Heart right ventricle (tissue), 16 donors: ENCODE measurements at regions of chr7 and their contacts with region 1.

Region 1: DNA sequence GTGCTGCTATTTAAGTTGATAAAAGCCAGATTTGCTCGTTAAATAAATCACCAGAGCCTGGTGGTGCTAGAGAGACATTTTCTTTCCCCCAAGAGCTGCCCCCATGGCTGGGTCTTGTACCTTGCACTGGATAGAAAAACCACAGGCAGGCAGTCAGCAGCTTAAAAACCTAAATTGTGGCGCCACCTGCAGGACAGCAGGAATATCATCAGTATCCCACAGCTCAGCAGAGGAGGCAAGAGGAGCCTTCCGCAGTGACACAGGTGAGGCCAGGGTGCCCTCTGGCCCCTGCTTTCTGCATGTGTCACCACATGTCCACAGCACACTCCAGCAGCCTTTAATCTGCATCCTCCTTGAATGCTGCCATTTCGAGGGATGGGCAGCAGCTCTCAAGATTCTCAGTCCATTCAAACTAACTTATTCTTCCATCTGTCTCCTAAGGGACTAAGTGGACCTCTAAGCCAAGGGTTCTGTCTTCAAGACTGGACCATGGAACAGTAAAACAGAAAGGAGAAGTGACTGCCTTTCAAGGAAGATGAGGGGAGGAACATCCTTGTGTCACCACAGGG is 4.5 kb upstream of the PLXNA4 start:
- DNase-seq: peak; percentile 36 to 81
- ATAC-seq: peak; percentile 16 to 71 (median 59)
- H3K4me3 ChIP-seq: no peak overlapping the region
- H3K27ac ChIP-seq: no peak overlapping the region
- H3K4me1 ChIP-seq: peaks cover 0 to 24% (median 7%) of the 10 kb centered on the region in 9 donors
- H3K27me3 ChIP-seq: peaks cover 0 to 29% (median 15%) of the 10 kb centered on the region in 7 donors
- CTCF ChIP-seq: peak; percentile 43 to 86 (median 77)

Region 2: DNA sequence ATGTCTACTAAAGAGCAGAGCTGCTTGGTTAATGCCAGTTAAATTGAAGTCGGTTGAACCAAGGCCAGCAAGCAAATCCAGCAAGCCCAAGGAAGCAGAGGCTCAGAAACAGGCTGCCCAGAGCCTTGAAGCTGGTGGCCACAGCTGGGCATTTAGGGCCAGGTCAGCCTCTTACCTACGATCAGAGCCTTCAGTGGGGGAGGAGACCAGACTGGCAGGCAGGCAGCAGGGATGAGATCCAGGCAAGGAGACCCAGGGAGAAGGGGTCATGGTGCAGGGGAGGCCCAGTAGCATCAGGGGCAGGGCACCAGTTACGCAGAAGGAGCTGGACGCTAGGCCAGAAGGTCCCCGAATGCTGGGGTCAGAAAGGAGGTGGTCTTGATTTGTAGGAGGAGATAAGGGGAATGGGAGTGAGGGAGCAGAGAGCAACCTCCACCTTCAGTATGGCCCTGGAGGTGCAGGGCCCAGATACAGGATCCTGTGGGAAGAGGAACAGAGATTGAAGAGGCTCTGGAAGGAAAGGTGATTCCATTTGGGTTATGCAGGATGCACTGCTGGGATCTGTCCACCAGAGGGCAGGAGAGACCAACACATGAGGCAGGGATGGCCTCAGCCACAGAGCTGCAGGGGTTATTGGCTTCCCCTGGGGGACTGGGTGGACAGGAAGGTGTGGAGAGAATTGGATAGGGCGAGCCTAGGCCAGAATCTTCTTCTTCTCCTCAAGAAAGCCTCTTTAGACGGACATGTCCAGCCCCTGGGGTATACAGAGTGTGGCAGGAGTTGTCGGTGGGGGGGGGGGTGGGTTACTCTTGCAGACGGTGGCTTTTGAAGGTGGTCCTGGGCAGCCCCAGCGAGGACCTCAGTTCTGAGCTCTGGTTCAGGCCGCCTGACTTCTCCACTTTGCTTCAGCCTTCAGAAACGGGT is 891.8 kb before region 1 on chr7:
- intact Hi-C with region 1: loop called in 4 of 10 experiments (anchors 5 to 10 kb)
- DNase-seq: peak; percentile 58 to 60
- ATAC-seq: peak; percentile 54 to 85 (median 66)
- H3K4me3 ChIP-seq: no peak overlapping the region
- H3K27ac ChIP-seq: no peak overlapping the region
- H3K4me1 ChIP-seq: peaks cover 0 to 12% (median 6%) of the 10 kb centered on the region in 9 donors
- H3K27me3 ChIP-seq: peaks cover 5 to 57% (median 34%) of the 10 kb centered on the region in 7 donors
- CTCF ChIP-seq: peak; percentile 91 to 97 (median 93)

Region 3: GRCh38 chr7:131945313-131945911 is 635.4 kb before region 1 on chr7:
- intact Hi-C with region 1: loop called in 9 of 10 experiments (anchors 2 to 10 kb)
- DNase-seq: peak; percentile 9 to 47
- ATAC-seq: peak; percentile 41 to 82 (median 65)
- H3K4me3 ChIP-seq: peak overlapping the region in 6 of 10 donors; percentile 25 to 40 (median 30)
- H3K27ac ChIP-seq: no peak overlapping the region
- H3K4me1 ChIP-seq: peaks cover 0 to 18% (median 8%) of the 10 kb centered on the region in 9 donors
- H3K27me3 ChIP-seq: peaks cover 0 to 65% (median 41%) of the 10 kb centered on the region in 7 donors
- CTCF ChIP-seq: peak; percentile 65 to 91 (median 89)

Region 4: DNA sequence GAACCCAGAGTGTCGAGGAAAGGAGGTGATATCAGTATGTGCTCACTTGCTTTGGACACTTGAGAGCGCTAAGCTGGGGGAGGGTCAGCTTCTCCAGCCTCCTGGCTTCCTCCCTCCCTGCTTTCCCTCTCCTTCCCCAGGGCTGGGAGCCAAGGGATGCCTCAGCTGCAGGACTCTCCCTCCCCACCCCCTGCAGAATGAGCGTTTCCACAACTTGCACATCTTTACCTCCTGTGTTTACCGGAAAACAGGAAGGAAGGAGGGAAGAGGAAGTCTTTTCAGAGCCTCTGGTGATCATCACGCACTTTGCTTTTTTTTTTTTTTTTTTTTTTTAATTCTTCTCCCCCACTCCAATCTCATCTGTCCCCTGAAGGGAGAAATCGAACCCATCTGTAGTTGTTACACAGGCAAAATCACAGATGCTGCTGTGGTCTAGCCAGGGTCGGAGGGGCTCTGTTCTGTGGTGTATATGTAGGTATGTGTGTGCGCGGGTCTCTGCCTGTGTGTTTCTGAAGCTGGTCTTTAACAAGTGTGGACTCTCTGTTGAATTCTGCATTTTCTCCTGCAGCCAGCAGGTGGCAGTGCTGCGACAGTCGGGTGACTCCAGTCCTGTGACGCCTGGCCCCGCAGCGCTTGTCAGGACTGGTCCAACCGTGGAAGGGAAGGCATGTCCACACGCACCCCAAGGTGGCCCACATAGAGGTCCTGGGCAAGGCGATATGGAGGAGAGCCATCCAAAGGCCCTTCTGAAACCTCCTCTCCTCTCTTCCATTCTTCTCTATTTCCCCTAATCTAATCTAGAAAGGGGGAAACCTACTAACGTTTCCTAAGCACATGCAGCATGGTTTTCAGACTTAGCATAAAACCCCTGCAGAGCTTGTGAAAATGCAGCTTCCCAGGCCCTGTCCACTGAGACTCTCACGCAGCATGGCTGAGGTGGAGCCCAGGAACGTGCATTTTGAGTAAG is 262.2 kb before region 1 on chr7:
- intact Hi-C with region 1: loop called (anchors 1 to 5 kb)
- DNase-seq: peak; percentile 81 to 84
- ATAC-seq: peak; percentile 84 to 93 (median 90)
- H3K4me3 ChIP-seq: no peak overlapping the region
- H3K27ac ChIP-seq: no peak overlapping the region
- H3K4me1 ChIP-seq: peaks cover 0 to 14% (median 9%) of the 10 kb centered on the region in 9 donors
- H3K27me3 ChIP-seq: peaks cover 0 to 12% (median 0%) of the 10 kb centered on the region in 7 donors
- CTCF ChIP-seq: peak; percentile 84 to 94 (median 90)

Region 5: GRCh38 chr7:132394283-132395198 is 186.3 kb before region 1 on chr7:
- intact Hi-C with region 1: loop called in 7 of 10 experiments (anchors 5 to 10 kb)
- DNase-seq: no peak
- ATAC-seq: peak in 6 of 8 donors; percentile 18 to 46 (median 24)
- H3K4me3 ChIP-seq: no peak overlapping the region
- H3K27ac ChIP-seq: peak overlapping the region in 1 of 10 donors; percentile 17
- H3K4me1 ChIP-seq: peaks cover 4 to 48% (median 27%) of the 10 kb centered on the region in 9 donors
- H3K27me3 ChIP-seq: no peaks in the 10 kb centered on the region
- CTCF ChIP-seq: peak in 6 of 9 donors; percentile 37 to 55 (median 49)

Region 6: GRCh38 chr7:132500727-132501440 is 79.9 kb before region 1 on chr7:
- intact Hi-C with region 1: loop called in 1 of 10 experiments (anchors 10 kb)
- DNase-seq: peak; percentile 55 to 77
- ATAC-seq: peak; percentile 72 to 90 (median 84)
- H3K4me3 ChIP-seq: no peak overlapping the region
- H3K27ac ChIP-seq: peak overlapping the region in 2 of 10 donors; percentile 4 to 16
- H3K4me1 ChIP-seq: peaks cover 6 to 32% (median 17%) of the 10 kb centered on the region in 9 donors
- H3K27me3 ChIP-seq: no peaks in the 10 kb centered on the region
- CTCF ChIP-seq: peak in 8 of 9 donors; percentile 40 to 69 (median 52)

Region 7: DNA sequence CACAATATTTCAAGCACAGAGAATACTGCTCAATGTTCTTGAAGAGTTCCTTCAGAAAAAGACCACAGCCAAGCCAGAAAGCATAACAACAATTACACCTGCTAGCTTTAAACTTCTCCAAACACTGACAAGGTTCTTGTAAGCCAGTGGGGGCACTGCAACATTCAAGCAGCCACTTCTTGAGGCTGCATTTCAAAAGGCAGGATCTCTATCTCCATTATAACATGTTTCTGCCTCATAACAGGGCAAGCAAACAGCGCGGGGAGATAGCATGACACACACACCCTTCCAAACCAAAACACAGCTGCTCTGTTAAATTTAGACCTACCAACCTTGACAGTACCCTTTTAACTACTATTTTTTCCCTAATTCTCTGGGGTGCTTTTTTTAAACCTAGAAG is 470.3 kb after region 1 on chr7:
- intact Hi-C with region 1: loop called in 1 of 10 experiments (anchors 5 kb)
- DNase-seq: peak in 1 of 2 donors; percentile 10
- ATAC-seq: peak in 7 of 8 donors; percentile 44 to 59 (median 54)
- H3K4me3 ChIP-seq: no peak overlapping the region
- H3K27ac ChIP-seq: peak overlapping the region in 6 of 10 donors; percentile 42 to 82 (median 78)
- H3K4me1 ChIP-seq: peaks cover 8 to 71% (median 41%) of the 10 kb centered on the region in 9 donors
- H3K27me3 ChIP-seq: no peaks in the 10 kb centered on the region
- CTCF ChIP-seq: peak in 4 of 9 donors; percentile 9 to 41 (median 38)